OCI-LY7 (cell line): ENCODE measurements at regions of chr6 and their contacts with region 1.

Region 1: GRCh38 chr6:110682460-110682853 is 132.8 kb downstream of the CDK19 start:
- DNase-seq: peak; percentile 88
- H3K4me3 ChIP-seq: no peak overlapping the region
- H3K27ac ChIP-seq: no peak overlapping the region
- H3K4me1 ChIP-seq: peaks cover 12% of the 10 kb centered on the region
- CTCF ChIP-seq: peak; percentile 95

Region 2: DNA sequence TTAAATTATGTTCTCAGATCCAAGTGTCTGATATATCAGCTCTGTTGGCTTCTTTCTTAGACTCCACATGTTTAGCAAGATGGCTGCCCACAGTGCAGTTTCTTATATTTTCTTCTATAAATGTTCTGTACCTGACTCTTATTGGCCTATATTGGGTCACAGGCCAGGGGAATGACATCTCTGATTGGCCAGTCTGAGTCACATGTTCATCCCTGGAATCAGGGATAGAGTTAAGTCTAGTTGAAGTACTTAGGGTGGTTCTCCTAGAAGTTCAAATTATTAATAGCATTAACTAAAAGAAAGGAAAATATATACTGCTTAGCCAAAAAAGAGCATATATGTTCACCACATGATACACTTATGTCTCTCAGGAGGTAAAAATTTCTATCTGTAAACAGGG is 100.8 kb before region 1 on chr6:
- CTCF ChIA-PET with region 1: no interaction called
- POLR2A ChIA-PET with region 1: no interaction called
- intact Hi-C with region 1: no loop called
- DNase-seq: no peak
- H3K4me3 ChIP-seq: no peak overlapping the region
- H3K27ac ChIP-seq: no peak overlapping the region
- H3K4me1 ChIP-seq: no peaks in the 10 kb centered on the region
- CTCF ChIP-seq: no peak

Region 3: GRCh38 chr6:110815217-110816109 is 133.0 kb after region 1 on chr6 and contains the start of gene CDK19:
- CTCF ChIA-PET with region 1: interaction called, 3 read pairs
- POLR2A ChIA-PET with region 1: interaction called, 7 read pairs
- intact Hi-C with region 1: loop called (anchors 2 kb)
- DNase-seq: peak; percentile 99
- H3K4me3 ChIP-seq: peak within 1 kb of the TSS; percentile 78
- H3K27ac ChIP-seq: peak within 1 kb of the TSS; percentile 87
- H3K4me1 ChIP-seq: peaks cover 41% of the 10 kb centered on the region
- CTCF ChIP-seq: no peak
- total RNA-seq, gene CDK19: 15.4 and 16.3 TPM in 2 replicates

Region 4: DNA sequence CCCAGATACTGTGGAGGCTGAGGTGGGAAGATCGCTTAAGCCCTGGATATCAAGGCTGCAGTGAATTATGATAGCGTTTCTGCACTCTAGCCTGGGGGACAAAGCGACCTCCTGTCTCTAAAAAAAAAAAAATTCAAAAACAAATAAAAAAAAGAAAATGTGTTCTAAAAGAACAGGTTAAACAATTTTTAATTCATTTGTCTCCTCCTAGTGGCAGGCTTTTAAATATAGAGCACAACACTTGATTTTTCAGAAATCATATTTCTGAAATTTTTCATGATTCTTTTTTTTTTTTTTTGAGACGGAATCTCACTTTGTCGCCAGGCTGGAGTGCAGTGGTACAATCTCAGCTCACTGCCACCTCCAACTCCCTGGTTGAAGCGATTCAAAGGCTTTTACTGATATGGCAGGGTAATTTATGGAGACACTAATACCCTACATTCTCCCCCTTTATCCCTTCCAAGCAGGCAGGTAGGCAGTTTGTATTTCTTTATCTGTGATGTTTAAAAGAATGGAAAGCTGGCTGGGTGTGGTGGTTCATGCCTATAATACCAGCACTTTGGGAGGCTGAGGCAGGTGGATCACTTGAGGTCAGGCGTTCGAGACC is 267.3 kb after region 1 on chr6:
- CTCF ChIA-PET with region 1: interaction called, 3 read pairs
- POLR2A ChIA-PET with region 1: interaction called, 4 read pairs
- intact Hi-C with region 1: loop called (anchors 1 kb)
- DNase-seq: peak; percentile 57
- H3K4me3 ChIP-seq: no peak overlapping the region
- H3K27ac ChIP-seq: no peak overlapping the region
- H3K4me1 ChIP-seq: no peaks in the 10 kb centered on the region
- CTCF ChIP-seq: peak; percentile 85

Region 5: DNA sequence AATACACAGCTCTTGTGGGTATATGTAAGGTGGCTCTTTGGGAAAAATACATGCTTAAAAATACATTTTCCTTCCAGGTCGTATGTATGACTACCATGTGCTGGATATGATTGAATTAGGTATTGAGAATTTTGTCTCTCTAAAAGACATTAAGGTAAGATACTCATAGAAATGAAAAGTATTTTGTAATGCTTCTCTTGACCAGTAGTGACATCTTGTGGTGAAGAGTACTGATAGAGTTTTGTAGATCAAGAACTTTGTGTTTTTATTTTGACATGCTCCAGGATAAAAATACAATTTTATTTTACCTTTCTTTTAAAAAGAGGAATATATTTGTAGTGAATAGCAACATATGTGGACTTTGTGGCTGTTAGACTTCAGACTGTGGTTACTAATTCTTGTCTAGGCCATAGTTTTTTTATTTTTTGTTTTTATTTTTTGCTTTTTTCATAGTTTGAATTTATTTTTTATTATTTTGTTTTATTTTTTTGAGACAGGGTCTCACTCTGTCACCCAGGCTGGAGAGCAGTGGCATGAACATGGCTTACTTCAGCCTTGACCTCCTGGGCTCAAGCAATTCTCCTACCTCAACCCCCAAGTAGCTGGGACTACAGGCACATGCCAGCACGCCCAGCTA is 317.3 kb after region 1 on chr6:
- CTCF ChIA-PET with region 1: no interaction called
- POLR2A ChIA-PET with region 1: interaction called, 3 read pairs
- intact Hi-C with region 1: loop called (anchors 5 kb)
- DNase-seq: peak; percentile 31
- H3K4me3 ChIP-seq: no peak overlapping the region
- H3K27ac ChIP-seq: no peak overlapping the region
- H3K4me1 ChIP-seq: no peaks in the 10 kb centered on the region
- CTCF ChIP-seq: peak; percentile 77